Naive thymus-derived CD4-positive, alpha-beta T cell (primary cell): ENCODE measurements at regions of chr13 and their contacts with region 1.

Region 1: GRCh38 chr13:99990126-99990977 is 8.8 kb downstream of the ZIC2 start:
- DNase-seq: peak in 1 of 9 donors; percentile 19
- ATAC-seq: no peak
- H3K4me3 ChIP-seq: no peak overlapping the region
- H3K4me3 Mint-ChIP-seq: peak overlapping the region in 9 of 10 donors; percentile 23 to 64 (median 49)
- H3K27ac ChIP-seq: no peak overlapping the region
- H3K27ac Mint-ChIP-seq: peak overlapping the region in 3 of 9 donors; percentile 25 to 46 (median 34)
- H3K4me1 ChIP-seq: peaks cover 6 to 25% of the 10 kb centered on the region in 2 donors
- H3K4me1 Mint-ChIP-seq: peaks cover 4 to 36% (median 25%) of the 10 kb centered on the region in 7 donors
- H3K27me3 ChIP-seq: peaks cover 45 to 96% of the 10 kb centered on the region in 2 donors
- H3K27me3 Mint-ChIP-seq: peaks cover 73 to 96% (median 94%) of the 10 kb centered on the region in 5 donors

Region 2: GRCh38 chr13:99969919-99970621 is 20.3 kb before region 1 on chr13:
- CTCF ChIA-PET with region 1: interaction called, 4 read pairs
- POLR2A ChIA-PET with region 1: interaction called, 4 read pairs
- intact Hi-C with region 1: loop called in 1 of 2 experiments (anchors 2 kb)
- DNase-seq: peak in 1 of 9 donors; percentile 49
- ATAC-seq: peak; percentile 48
- H3K4me3 ChIP-seq: no peak overlapping the region
- H3K4me3 Mint-ChIP-seq: peak overlapping the region; percentile 82 to 95 (median 86)
- H3K27ac ChIP-seq: no peak overlapping the region
- H3K27ac Mint-ChIP-seq: peak overlapping the region in 8 of 9 donors; percentile 53 to 91 (median 86)
- H3K4me1 ChIP-seq: peaks cover 0 to 10% of the 10 kb centered on the region in 2 donors
- H3K4me1 Mint-ChIP-seq: peaks cover 18 to 34% (median 25%) of the 10 kb centered on the region in 7 donors
- H3K27me3 ChIP-seq: peaks cover 47 to 74% of the 10 kb centered on the region in 2 donors
- H3K27me3 Mint-ChIP-seq: peaks cover 68 to 79% (median 70%) of the 10 kb centered on the region in 5 donors